ENCODE measurements at regions of chr1 and their contacts with region 1.

Region 1: GRCh38 chr1:111222308-111223125 is 5.0 kb upstream of the CHI3L2 start:
- DNase-seq: no peak
- H3K4me3 ChIP-seq: no peak overlapping the region
- CTCF ChIP-seq: peak; percentile 99

Region 2: GRCh38 chr1:110829955-110830553 is 392.5 kb before region 1 on chr1:
- CTCF ChIA-PET with region 1: no interaction called
- POLR2A ChIA-PET with region 1: no interaction called
- DNase-seq: no peak
- H3K4me3 ChIP-seq: no peak overlapping the region
- CTCF ChIP-seq: peak; percentile 56

Region 3: DNA sequence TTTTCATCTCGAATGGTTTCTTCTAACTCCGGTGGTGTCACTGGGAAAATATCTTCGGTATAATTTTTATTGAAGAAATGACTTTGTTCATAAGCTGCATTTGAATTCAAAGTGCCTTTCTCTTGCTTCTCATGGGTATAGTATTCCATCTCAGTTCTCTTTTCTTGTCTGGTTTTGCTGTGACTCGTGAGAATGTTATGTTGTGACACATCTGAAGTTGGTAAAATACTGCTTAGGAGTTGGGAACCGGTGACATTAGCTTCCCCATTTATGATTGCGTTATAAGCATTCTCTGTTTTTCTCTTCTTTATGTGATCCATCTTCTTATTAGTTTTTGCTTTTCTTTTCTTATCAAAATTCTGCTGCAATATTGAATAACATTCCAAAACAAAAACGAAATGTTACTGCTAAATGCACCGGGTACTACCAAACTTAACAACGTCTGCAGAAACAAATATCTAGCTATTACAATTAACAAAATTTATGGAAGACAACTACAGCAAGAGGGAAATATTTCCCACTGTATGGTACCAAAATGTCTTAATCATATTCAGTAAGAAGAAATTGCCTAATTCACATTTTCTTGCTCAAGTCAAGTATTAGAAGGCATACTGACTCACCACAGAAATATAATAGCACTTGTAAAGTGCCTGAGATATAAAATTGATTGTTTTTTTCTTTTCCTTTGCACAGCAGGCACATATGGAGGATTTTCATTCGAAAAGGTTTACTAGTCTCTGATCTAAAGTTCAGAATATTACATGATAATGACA is 274.3 kb before region 1 on chr1:
- CTCF ChIA-PET with region 1: no interaction called
- POLR2A ChIA-PET with region 1: no interaction called
- DNase-seq: no peak
- H3K4me3 ChIP-seq: no peak overlapping the region
- CTCF ChIP-seq: no peak

Region 4: GRCh38 chr1:111030590-111030989 is 191.9 kb before region 1 on chr1:
- CTCF ChIA-PET with region 1: interaction called, 10 read pairs
- POLR2A ChIA-PET with region 1: no interaction called
- DNase-seq: no peak
- H3K4me3 ChIP-seq: no peak overlapping the region
- CTCF ChIP-seq: peak; percentile 78

Region 5: GRCh38 chr1:111205714-111206050 is 16.8 kb before region 1 on chr1:
- CTCF ChIA-PET with region 1: interaction called, 11 read pairs
- POLR2A ChIA-PET with region 1: no interaction called
- DNase-seq: peak; percentile 34
- H3K4me3 ChIP-seq: no peak overlapping the region
- CTCF ChIP-seq: no peak

Region 6: GRCh38 chr1:111267801-111268508 is 45.4 kb after region 1 on chr1:
- CTCF ChIA-PET with region 1: no interaction called
- POLR2A ChIA-PET with region 1: no interaction called
- DNase-seq: no peak
- H3K4me3 ChIP-seq: no peak overlapping the region
- CTCF ChIP-seq: no peak

Region 7: GRCh38 chr1:111320106-111320879 is 97.8 kb after region 1 on chr1:
- CTCF ChIA-PET with region 1: interaction called, 11 read pairs
- POLR2A ChIA-PET with region 1: no interaction called
- DNase-seq: no peak
- H3K4me3 ChIP-seq: no peak overlapping the region
- CTCF ChIP-seq: no peak

Region 8: DNA sequence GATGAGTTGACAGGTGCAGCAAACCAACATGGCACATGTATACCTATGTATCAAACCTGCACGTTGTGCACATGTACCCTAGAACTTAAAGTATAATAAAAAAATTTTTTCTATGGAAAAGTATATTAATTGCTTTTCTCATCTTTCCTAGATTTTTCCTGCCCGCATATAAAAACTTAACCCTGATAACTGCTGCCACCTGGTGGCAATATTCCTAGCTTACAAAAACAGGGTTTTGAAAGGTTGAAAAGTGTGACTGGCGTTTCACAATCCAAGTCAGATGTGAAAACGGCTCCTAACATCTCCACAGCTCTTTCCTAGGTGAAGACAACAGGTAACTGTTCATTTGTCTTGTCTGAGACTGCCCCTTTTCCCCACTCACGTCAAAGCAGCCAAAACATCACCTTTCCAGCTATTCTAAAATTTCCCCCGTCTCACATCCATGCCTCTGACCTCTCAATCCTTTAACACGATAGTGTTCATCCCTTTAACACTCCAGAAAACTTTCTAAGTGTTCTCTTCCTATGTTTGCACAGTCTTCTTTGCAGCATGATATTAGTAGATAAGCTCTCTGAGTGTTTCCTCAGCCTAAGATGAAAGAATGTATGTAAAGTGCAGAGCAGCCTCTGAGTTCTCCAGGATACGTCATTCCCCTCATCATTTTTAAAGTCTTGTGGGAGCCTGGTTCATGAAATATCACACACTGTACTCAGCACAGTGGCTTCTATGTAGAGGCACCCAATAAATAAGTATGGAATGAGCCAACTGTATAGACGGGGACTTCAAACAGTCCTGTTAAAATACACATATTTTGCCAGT is 177.5 kb after region 1 on chr1:
- CTCF ChIA-PET with region 1: interaction called, 117 read pairs
- POLR2A ChIA-PET with region 1: no interaction called
- DNase-seq: no peak
- H3K4me3 ChIP-seq: no peak overlapping the region
- CTCF ChIP-seq: peak; percentile 54

Region 9: GRCh38 chr1:111422566-111423391 is 200.3 kb after region 1 on chr1:
- CTCF ChIA-PET with region 1: no interaction called
- POLR2A ChIA-PET with region 1: no interaction called
- DNase-seq: no peak
- H3K4me3 ChIP-seq: no peak overlapping the region
- CTCF ChIP-seq: no peak